Mammary epithelial cell (primary cell): ENCODE measurements at regions of chr2 and their contacts with region 1.

Region 1: DNA sequence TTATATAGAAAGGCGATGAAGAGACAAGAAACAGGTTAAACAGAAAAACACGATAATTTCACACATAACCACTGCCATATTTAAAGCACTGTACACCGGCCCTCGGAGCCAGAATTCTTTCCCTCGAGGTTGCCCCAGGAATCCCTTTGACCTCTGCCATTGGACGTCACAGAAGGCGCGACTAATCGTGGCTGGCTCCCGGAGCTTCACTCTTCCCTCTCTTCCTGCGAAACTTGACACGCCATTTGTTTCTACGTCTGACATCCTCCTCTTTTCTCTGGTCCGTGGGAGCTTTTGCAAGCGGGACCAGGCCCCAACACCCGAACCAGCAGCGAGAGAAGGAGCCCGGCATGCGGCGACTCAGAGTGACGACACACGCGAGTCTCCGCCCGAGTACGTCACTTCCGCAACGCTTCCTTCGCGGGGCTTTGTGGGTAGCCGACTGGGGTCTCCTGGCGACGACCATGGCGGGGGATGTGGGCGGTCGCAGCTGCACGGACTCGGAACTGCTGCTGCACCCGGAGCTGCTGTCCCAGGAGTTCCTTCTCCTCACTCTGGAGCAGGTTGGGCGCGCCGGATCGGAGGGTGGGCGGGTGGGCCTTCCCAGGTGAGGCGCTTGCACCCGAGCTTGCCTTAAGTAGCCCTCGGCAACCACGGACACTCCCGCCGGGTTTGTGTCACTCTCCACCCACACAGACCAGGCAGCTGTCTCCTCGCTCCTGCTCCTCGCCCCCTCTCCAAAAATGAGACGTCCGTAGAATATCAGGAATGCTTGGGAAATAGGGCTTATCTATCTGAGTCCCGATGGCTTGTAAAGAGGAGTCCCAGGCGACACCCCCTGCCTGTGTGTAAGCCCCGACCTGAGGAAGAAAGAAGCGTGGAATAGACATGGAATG is at the start of gene C2orf49:
- DNase-seq: peak; percentile 82
- H3K4me3 ChIP-seq: peak within 1 kb of the TSS; percentile 69 to 97 (median 89)
- H3K27ac ChIP-seq: peak within 1 kb of the TSS; percentile 100
- H3K4me1 ChIP-seq: peaks cover 15% of the 10 kb centered on the region
- H3K27me3 ChIP-seq: no peaks in the 10 kb centered on the region
- CTCF ChIP-seq: no peak
- total RNA-seq, gene C2orf49: 16.5 TPM

Region 2: DNA sequence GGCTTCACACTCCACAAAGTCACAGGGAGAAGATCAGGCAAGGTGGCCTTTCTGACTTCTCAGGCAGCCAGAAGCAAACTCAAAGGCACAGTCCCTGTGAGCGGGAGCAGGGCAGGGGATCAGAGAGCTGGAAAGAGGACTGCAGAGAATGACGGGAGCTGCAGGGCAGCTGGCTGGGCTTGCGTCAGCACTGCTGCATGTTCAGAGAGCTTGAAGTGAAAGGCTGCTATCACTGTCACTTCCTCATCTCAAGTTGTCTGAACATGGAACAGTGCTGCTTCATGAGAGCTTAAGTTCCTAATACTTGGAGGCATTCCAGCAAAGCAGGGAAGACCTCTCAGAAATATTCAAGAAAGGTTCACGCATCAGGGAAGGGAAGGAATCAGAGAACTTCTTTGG is 28.2 kb before region 1 on chr2:
- CTCF ChIA-PET with region 1: no interaction called
- dilution Hi-C with region 1: no loop called
- in situ Hi-C with region 1: no loop called
- intact Hi-C with region 1: no loop called
- DNase-seq: no peak
- H3K4me3 ChIP-seq: no peak overlapping the region
- H3K27ac ChIP-seq: no peak overlapping the region
- H3K4me1 ChIP-seq: no peaks in the 10 kb centered on the region
- H3K27me3 ChIP-seq: no peaks in the 10 kb centered on the region
- CTCF ChIP-seq: no peak

Region 3: DNA sequence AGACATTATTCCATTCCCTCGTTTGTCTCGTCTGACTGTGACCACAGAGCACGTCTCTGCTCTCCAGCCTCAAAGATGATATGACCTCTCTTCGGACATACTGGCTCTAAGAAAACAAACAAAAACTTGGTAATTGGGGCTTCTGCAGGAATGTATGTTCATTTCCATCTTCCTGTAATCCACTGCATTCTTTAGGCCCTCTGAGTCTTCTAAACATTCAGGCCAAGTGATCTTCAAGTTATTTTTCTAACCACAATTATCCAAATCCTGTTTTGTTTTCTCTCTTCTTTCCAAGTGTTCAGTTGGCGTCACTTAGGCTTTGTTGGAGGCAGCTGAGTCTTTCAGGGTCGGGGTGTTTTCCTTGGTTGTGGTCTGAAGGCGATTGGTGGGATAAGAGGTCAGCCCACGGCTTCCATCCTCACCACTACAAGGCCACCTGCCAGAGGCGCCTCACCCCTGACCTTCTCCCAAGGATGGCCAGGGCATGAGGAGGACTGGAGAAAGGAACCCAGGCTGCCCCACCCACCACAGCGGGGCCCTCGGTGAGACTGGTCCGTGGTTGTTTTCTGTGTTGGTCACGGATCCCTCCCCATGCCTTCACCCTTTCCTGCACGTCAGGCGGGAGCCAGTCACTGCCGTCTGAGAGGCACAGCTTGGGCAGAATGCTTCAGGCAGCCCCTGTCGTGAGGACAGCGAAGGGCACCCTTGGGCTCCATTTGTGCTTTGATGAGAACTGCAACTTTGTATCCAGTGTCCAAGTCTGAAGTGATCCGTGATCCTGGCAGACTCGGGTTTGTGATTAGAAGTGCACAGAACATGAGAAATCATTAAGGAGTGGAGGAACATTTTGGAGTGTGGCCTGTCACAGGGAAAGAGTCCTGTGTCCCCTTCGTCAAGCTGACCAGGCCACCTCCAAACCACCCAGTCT is 150.0 kb after region 1 on chr2:
- CTCF ChIA-PET with region 1: no interaction called
- dilution Hi-C with region 1: no loop called
- in situ Hi-C with region 1: no loop called
- intact Hi-C with region 1: loop called (anchors 1 kb)
- DNase-seq: no peak
- H3K4me3 ChIP-seq: no peak overlapping the region
- H3K27ac ChIP-seq: no peak overlapping the region
- H3K4me1 ChIP-seq: no peaks in the 10 kb centered on the region
- H3K27me3 ChIP-seq: no peaks in the 10 kb centered on the region
- CTCF ChIP-seq: no peak